G401 (cell line): ENCODE measurements at regions of chr1 and their contacts with region 1.

Region 1: DNA sequence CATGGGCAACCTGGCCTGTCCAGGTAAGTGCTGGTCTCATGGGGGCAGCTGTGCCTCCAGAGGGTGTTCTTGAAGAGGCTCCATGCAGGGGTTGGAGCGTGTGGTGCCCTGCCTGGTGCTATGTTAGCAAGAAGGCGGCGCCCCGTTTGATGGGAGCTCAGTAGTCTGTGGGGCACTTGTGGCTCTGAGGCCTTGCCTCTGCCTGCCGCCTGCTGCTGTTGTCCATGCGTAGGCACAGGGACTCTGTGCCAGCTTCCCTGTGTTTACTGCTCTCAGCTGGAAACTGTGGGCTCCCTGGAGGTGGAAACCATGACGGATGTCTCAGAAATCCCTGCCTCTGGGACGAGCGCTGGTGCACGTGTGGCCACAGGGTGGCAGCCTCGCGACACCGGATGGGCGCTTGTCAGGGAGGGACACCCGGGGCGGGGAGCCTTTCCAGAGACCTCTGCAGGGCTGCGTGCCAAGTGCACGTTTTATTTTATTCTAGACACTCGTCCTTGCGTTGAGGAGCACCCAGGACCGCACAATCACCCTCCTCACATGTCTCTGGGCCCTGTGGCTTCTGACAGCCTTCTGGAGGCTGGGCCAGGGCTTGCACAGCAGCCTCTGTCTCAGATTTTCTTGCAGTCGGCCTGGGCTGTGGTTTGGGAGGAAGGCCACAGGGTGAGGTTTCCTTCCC is 27.1 kb downstream of the SNAP47 start:
- DNase-seq: peak; percentile 80

Region 2: GRCh38 chr1:227673441-227673840 is 88.9 kb before region 1 on chr1:
- in situ Hi-C with region 1: no loop called
- DNase-seq: no peak

Region 3: DNA sequence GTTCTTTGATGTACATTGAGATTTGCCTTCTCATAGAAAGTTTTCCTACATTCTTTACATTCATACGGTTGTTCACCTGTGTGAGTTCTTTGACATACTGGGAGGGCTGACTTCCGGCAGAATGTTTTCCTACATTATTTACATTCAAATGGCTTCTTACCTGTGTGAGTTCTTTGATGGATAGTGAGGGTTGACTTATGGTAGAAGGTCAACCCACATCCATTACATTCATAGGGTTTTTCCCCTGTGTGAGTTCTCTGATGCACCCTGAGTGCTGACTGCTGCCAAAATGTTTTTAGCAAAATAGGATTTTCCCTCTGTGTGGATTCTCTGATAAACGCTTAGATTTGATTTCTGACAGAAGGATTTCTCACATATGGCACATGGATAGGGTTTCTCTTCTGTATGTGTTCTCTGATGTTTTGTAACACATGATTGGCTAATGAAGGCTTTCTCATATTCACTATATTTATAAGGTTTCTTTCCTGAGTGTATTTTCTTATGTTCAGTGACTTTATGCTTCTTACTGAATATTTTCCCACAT is 65.0 kb before region 1 on chr1:
- in situ Hi-C with region 1: loop called (anchors 10 kb)
- DNase-seq: no peak

Region 4: DNA sequence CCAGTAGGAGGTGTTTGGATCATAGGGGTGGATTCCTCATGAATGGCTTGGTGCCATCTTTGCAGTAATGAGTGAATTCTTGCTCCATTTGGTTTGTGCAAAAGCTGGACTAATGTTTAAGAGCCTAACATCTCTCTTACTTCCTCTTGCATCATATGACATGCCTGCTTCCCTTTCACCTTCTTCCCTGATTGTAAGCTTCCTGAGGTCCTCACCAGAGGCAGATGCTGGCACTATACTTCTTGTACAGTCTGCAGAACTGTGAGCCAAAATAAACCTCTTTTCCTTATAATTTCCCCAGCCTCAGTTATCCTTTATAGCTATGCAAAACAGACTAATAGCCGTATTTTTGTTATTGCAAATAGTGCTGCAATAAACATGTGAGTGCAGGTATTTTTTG is 61.2 kb after region 1 on chr1:
- in situ Hi-C with region 1: no loop called
- DNase-seq: no peak

Region 5: DNA sequence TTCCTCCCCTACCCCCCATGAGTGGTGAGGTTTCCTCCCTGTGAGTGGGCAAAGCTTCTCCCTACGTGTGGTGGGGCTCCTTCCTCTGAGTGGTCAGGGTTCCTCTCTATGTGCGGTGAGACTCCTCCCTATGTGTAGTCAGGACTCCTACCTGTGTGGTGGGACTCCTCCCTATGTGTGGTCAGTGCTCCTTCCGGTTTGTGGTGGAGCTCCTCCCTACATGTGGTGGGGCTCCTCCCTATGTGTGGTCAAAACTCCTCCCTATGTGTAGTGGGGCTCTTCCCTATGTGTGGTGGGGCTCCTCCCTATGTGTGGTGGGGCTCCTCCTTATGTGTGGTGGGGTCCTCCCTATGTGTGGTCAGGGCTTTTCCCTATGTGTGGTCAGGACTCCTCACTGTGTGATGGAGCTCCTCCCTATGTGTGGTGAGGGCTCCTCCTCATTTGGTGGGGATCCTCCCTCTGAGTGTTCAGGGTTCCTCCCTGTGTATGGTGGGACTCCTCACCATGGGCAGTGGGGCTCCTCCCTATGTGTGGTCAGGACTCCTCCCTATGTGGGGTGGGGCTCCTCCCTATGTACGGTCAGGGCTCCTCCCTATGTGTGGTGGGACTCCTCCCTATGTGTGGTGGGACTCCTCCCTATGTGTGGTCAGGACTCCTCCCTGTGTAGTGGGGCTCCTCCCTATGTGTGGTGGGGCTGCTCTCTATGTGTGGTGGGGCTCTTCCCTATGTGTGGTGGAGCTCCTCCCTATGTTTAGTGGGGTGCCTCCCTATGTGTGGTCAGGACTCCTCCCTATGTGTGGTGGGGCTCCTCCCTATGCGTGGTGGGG is 82.2 kb after region 1 on chr1:
- in situ Hi-C with region 1: no loop called
- DNase-seq: no peak

Region 6: GRCh38 chr1:227946624-227947385 is 184.4 kb after region 1 on chr1:
- in situ Hi-C with region 1: loop called (anchors 25 kb)
- DNase-seq: peak; percentile 77